OCI-LY7 (cell line): ENCODE measurements at regions of chr13 and their contacts with region 1.

Region 1: DNA sequence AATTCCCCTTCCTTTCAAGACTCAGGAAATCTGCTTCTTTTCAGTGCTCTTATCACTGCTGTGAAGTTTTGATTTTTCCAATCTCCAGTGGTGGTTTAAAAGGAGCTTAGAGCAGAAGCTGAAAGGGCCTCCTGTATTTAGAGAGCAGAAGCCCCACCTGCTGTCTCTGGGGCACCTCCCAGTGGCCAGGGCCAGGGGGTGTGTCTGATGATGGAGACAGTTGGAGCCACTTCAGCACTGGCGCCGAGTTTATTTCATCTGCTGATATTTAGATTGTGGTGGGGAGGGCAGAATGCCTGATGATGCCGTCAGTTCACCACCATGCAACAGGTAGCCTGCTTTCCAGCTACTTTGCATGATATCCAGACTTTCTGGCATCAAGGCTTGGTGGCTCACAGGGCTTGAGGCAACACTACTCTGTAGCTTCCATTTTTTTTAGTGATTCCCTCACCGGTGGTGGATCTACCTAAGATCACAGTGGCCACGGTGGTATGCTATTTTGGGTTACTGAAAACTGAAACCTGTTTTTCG is 371.9 kb downstream of the KCNRG start:
- DNase-seq: peak; percentile 75
- H3K4me3 ChIP-seq: peak overlapping the region; percentile 31
- H3K27ac ChIP-seq: no peak overlapping the region
- H3K4me1 ChIP-seq: peaks cover 17% of the 10 kb centered on the region
- CTCF ChIP-seq: peak; percentile 79

Region 2: GRCh38 chr13:49954674-49955491 is 432.2 kb before region 1 on chr13:
- CTCF ChIA-PET with region 1: no interaction called
- POLR2A ChIA-PET with region 1: no interaction called
- intact Hi-C with region 1: no loop called
- DNase-seq: no peak
- H3K4me3 ChIP-seq: no peak overlapping the region
- H3K27ac ChIP-seq: no peak overlapping the region
- H3K4me1 ChIP-seq: no peaks in the 10 kb centered on the region
- CTCF ChIP-seq: no peak

Region 3: GRCh38 chr13:50309882-50310594 is 77.1 kb before region 1 on chr13:
- CTCF ChIA-PET with region 1: no interaction called
- POLR2A ChIA-PET with region 1: no interaction called
- intact Hi-C with region 1: loop called (anchors 5 kb)
- DNase-seq: no peak
- H3K4me3 ChIP-seq: no peak overlapping the region
- H3K27ac ChIP-seq: no peak overlapping the region
- H3K4me1 ChIP-seq: peaks cover 7% of the 10 kb centered on the region
- CTCF ChIP-seq: no peak

Region 4: DNA sequence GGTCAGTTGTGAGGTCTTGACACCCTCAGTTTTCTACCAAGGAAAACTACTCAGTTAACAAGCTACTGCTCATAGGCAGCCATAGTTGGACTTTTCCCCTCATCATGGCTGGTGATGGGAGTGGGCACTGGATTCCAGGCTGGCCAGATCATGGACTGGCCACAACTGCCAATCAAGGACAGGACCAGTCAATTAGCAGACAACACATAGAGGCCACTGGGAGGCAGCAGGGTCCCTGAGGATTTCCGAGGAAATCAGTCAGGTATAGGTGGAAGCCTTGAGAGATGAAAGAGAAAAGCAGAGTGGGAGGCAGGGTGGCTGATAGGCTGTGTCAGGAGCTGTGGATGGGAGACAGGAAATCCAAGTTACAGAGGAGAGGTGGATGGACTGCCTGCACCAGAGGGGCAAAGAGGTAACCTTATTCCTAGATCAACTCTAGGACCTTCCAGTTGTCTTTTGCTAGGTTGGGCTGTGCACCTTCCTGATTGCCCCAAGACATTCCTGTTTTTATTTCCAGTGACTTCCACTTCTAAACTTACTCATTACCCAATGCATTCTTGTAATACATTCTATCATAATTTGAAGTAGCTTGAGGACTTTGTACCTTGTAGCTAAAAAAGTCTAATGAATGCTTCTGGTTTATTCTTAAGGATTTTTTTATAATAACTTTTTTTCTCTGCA is 10.1 kb before region 1 on chr13:
- CTCF ChIA-PET with region 1: no interaction called
- POLR2A ChIA-PET with region 1: interaction called, 10 read pairs
- intact Hi-C with region 1: no loop called
- DNase-seq: no peak
- H3K4me3 ChIP-seq: no peak overlapping the region
- H3K27ac ChIP-seq: no peak overlapping the region
- H3K4me1 ChIP-seq: peaks cover 42% of the 10 kb centered on the region
- CTCF ChIP-seq: peak; percentile 42; the same call in 1 of the 2 replicates